Activated B cell treated with CpG ODN at 0.5 μM for 24 hours (primary cell): ENCODE measurements at regions of chr19 and their contacts with region 1.

Region 1: DNA sequence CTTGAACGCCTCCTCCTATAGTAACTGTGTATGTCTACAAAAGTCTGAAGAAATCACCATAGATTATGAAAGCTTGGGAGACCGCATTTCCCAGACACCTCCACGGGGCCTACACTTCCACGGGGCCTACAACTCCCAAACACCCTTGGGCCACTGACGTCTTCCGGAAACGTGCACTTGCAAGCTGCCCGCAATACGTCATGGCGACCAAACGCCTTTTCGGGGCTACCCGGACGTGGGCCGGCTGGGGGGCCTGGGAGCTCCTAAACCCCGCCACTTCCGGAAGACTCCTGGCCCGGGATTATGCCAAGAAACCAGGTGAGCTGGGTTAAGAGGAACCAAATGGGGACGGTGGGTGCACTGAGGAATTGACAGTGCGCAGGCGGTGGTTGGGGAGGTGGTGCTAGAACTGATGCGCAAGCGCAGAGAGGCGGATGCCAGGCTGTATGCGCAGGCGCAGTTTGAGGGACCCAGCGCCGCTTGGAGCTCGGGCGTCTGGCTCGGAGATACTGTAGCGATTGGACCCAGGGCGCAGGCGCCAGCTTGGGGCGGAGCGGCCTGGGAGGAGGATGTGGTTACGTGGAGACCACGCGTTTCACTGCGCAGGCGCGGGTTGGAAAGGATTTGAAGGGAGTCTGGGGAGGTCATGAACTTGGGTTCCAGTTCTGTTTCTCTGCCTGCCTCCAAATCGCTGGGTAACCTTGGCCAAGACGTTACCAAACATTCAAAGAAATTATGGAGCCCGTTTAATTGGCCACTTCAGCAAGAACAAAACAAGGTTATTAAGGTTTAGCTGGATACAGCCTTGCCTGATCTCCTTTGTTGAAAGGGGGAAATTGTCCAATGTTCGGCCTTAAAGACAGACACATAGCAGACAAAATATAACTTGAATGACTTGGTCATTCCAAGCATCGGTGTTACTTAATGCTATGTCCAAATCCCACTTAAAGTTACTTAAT is at the start of gene MRPL54:
- DNase-seq: peak; percentile 99
- ATAC-seq: peak; percentile 81
- H3K4me3 Mint-ChIP-seq: peak within 1 kb of the TSS; percentile 96
- H3K27ac Mint-ChIP-seq: peak within 1 kb of the TSS; percentile 100
- H3K4me1 Mint-ChIP-seq: peaks cover 43% of the 10 kb centered on the region
- H3K27me3 Mint-ChIP-seq: no peaks in the 10 kb centered on the region
- CTCF ChIP-seq: no peak
- total RNA-seq, gene MRPL54: 81.2 and 90.0 TPM in 2 replicates

Region 2: DNA sequence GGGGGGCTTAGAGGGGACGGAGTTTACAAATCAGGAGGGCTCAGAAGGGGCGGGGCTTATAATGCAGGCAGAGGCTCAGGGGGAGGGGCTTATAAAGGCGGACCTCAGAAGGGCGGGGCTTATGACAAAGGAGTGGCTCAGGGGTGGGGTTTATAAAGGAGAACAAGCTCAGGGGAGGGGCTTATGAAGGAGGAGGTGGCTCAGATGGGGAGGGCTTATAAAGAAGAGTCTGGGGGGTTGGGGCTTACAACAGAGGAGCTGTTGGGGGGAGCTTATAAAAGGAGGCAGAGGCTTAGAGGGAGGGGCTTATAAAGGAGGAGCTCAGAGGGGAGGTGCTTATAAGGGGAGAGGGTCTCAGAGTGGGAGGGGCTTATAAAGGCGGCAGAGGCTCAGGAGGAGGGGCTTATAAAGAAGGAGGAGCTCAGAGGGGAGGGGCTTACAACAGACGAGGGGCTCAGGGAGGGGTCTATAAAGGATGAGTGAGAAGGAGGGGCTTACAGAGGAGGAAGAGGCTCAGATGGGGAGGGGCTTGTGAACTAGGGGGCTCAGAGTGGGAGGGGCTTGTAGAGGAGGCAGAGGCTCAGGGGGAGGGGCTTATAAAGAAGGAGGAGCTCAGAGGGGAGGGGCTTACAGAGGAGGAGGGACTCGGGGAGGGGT is 283.5 kb before region 1 on chr19:
- CTCF ChIA-PET with region 1: no interaction called
- POLR2A ChIA-PET with region 1: interaction called, 17 read pairs
- intact Hi-C with region 1: no loop called
- DNase-seq: no peak
- ATAC-seq: peak; percentile 86
- H3K4me3 Mint-ChIP-seq: peak overlapping the region; percentile 72
- H3K27ac Mint-ChIP-seq: no peak overlapping the region
- H3K4me1 Mint-ChIP-seq: peaks cover 16% of the 10 kb centered on the region
- H3K27me3 Mint-ChIP-seq: no peaks in the 10 kb centered on the region
- CTCF ChIP-seq: no peak

Region 3: GRCh38 chr19:3572132-3572854 is 190.5 kb before region 1 on chr19:
- CTCF ChIA-PET with region 1: no interaction called
- POLR2A ChIA-PET with region 1: interaction called, 3 read pairs
- intact Hi-C with region 1: loop called (anchors 5 kb)
- DNase-seq: peak; percentile 94
- ATAC-seq: peak; percentile 95
- H3K4me3 Mint-ChIP-seq: peak overlapping the region; percentile 81
- H3K27ac Mint-ChIP-seq: peak overlapping the region; percentile 53
- H3K4me1 Mint-ChIP-seq: peaks cover 19% of the 10 kb centered on the region
- H3K27me3 Mint-ChIP-seq: no peaks in the 10 kb centered on the region
- CTCF ChIP-seq: no peak

Region 4: GRCh38 chr19:3809881-3810707 is 47.3 kb after region 1 on chr19:
- CTCF ChIA-PET with region 1: interaction called, 5 read pairs
- POLR2A ChIA-PET with region 1: interaction called, 84 read pairs
- intact Hi-C with region 1: loop called (anchors 1 kb)
- DNase-seq: no peak
- ATAC-seq: peak; percentile 66
- H3K4me3 Mint-ChIP-seq: peak overlapping the region; percentile 52
- H3K27ac Mint-ChIP-seq: peak overlapping the region; percentile 77
- H3K4me1 Mint-ChIP-seq: peaks cover 62% of the 10 kb centered on the region
- H3K27me3 Mint-ChIP-seq: no peaks in the 10 kb centered on the region
- CTCF ChIP-seq: no peak

Region 5: GRCh38 chr19:3984908-3985642 is 222.3 kb after region 1 on chr19 and contains the start of gene EEF2:
- CTCF ChIA-PET with region 1: interaction called, 11 read pairs
- POLR2A ChIA-PET with region 1: interaction called, 17 read pairs
- intact Hi-C with region 1: loop called (anchors 1 kb)
- DNase-seq: peak; percentile 91
- ATAC-seq: peak; percentile 38
- H3K4me3 Mint-ChIP-seq: peak within 1 kb of the TSS; percentile 96
- H3K27ac Mint-ChIP-seq: peak within 1 kb of the TSS; percentile 91
- H3K4me1 Mint-ChIP-seq: peaks cover 65% of the 10 kb centered on the region
- H3K27me3 Mint-ChIP-seq: no peaks in the 10 kb centered on the region
- CTCF ChIP-seq: no peak
- total RNA-seq, gene EEF2: 2,958 and 3,229 TPM in 2 replicates

Region 6: DNA sequence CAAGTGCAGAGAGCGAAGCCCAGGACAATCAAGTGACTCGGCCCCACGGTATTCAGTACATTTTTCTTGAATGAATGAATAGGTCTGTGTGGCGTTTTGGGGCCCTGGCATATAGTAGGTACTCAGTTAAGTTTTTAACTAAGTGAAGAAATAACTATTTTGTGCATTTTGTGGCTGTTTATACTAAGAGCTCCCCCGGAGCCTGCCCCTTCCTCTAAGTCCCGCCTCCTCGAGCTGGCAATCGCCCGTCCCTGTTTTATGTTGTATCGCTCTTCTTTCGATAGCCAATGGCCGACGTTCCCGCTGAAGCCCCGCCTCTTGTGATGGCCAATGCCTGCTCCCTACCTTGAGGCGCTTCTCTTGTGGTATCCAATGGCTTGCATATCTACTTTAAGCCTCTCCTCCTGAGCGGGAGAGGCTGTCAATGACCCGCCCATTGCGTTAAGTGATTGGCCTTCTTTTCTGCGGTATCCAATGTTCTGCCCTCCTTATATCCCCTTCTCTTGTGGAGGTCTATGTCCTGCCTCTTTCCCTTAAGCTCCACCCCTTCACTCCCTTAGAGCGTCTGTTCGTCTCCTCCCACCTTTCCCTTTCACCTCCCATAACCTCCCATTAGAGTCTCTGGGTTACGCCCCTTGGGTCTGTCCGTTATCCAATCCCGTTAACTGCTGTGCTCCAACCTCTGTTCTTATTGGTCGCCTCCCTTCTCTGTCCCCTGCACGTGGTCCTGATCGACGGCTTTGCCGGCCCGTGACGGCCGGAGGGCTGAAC is 708.8 kb after region 1 on chr19:
- CTCF ChIA-PET with region 1: no interaction called
- POLR2A ChIA-PET with region 1: interaction called, 10 read pairs
- intact Hi-C with region 1: loop called (anchors 5 kb)
- DNase-seq: peak; percentile 83
- ATAC-seq: peak; percentile 86
- H3K4me3 Mint-ChIP-seq: no peak overlapping the region
- H3K27ac Mint-ChIP-seq: no peak overlapping the region
- H3K4me1 Mint-ChIP-seq: peaks cover 22% of the 10 kb centered on the region
- H3K27me3 Mint-ChIP-seq: no peaks in the 10 kb centered on the region
- CTCF ChIP-seq: no peak

Region 7: DNA sequence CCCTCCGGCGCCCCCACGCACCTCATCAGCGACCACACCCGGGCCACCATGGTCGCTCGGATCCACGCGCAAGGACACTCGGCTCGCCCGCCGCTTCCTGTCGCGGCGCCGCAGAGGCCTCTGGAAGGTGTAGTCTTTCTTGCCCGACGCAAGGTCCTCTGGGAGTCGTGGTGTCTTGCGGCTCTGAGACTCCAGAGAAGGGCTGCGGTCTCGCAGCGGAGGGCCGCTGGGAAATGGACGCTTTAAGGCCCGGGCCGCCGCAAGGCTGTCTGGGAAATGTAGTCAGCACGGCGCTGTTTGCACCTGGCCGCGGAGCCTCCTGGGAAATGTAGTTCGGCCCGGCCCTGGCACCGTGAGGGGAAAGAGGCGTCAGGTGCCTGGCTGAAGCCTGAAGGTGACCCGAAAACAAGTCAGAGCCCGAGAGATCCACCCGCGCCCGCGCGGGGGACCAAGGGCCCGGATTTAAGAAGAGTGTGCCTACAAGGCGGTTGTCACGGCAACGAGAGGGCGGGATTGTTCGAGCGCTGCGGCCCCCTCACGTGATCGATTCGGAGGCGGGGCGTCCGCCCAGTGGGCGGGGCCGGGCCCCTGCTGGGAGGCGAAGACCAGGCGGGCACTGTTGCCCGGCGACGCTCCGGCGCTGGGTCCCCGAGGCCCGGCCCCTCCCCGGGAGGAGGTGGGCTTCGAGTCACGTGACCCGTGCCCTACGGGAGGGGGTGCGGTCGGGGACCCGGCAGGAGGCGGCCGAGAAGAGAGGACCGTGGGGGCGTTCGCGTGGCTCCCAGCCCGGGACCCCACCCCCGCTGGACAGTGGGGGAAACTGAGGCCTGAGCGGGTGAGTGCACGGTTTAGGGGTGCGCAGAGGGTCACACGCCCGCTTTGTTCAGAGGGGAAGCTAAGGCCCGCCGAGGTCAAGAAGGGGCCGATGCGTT is 1917.9 kb after region 1 on chr19 and contains the starts of genes HSD11B1L and MICOS13:
- CTCF ChIA-PET with region 1: no interaction called
- POLR2A ChIA-PET with region 1: no interaction called
- intact Hi-C with region 1: loop called (anchors 5 kb)
- DNase-seq: peak; percentile 100
- ATAC-seq: peak; percentile 92
- H3K4me3 Mint-ChIP-seq: peak within 1 kb of the TSS; percentile 96
- H3K27ac Mint-ChIP-seq: peak within 1 kb of the TSS; percentile 100
- H3K4me1 Mint-ChIP-seq: peaks cover 28% of the 10 kb centered on the region
- H3K27me3 Mint-ChIP-seq: peaks cover 2% of the 10 kb centered on the region
- CTCF ChIP-seq: no peak
- total RNA-seq, gene HSD11B1L: 1.4 and 1.5 TPM in 2 replicates
- total RNA-seq, gene MICOS13: 58.0 and 60.8 TPM in 2 replicates